PC-9 (cell line): ENCODE measurements at regions of chr1 and their contacts with region 1.

Region 1: GRCh38 chr1:172745014-172745413 is 86.1 kb downstream of the FASLG start:
- DNase-seq: peak; percentile 38 to 66
- H3K4me3 ChIP-seq: no peak overlapping the region
- H3K27ac ChIP-seq: no peak overlapping the region
- H3K4me1 ChIP-seq: peaks cover 22% of the 10 kb centered on the region
- H3K27me3 ChIP-seq: 0 out of 2 replicates have a peak, but pooled peaks cover 5% of the 10 kb centered on the region
- CTCF ChIP-seq: peak; percentile 86

Region 2: GRCh38 chr1:171636141-171636540 is 1108.9 kb before region 1 on chr1:
- CTCF ChIA-PET with region 1: no interaction called
- POLR2A ChIA-PET with region 1: no interaction called
- intact Hi-C with region 1: no loop called
- DNase-seq: no peak
- H3K4me3 ChIP-seq: no peak overlapping the region
- H3K27ac ChIP-seq: no peak overlapping the region
- H3K4me1 ChIP-seq: no peaks in the 10 kb centered on the region
- H3K27me3 ChIP-seq: peaks cover 24% of the 10 kb centered on the region
- CTCF ChIP-seq: no peak

Region 3: GRCh38 chr1:173043253-173043652 is 298.2 kb after region 1 on chr1:
- CTCF ChIA-PET with region 1: no interaction called
- POLR2A ChIA-PET with region 1: no interaction called
- intact Hi-C with region 1: loop called (anchors 2 kb)
- DNase-seq: peak in 1 of 2 experiments; percentile 79
- H3K4me3 ChIP-seq: peak overlapping the region; percentile 34; the same call in 1 of the 2 replicates
- H3K27ac ChIP-seq: peak overlapping the region; percentile 84
- H3K4me1 ChIP-seq: peaks cover 32% of the 10 kb centered on the region
- H3K27me3 ChIP-seq: no peaks in the 10 kb centered on the region
- CTCF ChIP-seq: no peak

Region 4: GRCh38 chr1:173202430-173203145 is 457.6 kb after region 1 on chr1:
- CTCF ChIA-PET with region 1: interaction called, 3 read pairs
- POLR2A ChIA-PET with region 1: interaction called, 6 read pairs
- intact Hi-C with region 1: loop called (anchors 1 kb)
- DNase-seq: peak in 1 of 2 experiments; percentile 33
- H3K4me3 ChIP-seq: no peak overlapping the region
- H3K27ac ChIP-seq: no peak overlapping the region
- H3K4me1 ChIP-seq: no peaks in the 10 kb centered on the region
- H3K27me3 ChIP-seq: no peaks in the 10 kb centered on the region
- CTCF ChIP-seq: peak; percentile 78

Region 5: DNA sequence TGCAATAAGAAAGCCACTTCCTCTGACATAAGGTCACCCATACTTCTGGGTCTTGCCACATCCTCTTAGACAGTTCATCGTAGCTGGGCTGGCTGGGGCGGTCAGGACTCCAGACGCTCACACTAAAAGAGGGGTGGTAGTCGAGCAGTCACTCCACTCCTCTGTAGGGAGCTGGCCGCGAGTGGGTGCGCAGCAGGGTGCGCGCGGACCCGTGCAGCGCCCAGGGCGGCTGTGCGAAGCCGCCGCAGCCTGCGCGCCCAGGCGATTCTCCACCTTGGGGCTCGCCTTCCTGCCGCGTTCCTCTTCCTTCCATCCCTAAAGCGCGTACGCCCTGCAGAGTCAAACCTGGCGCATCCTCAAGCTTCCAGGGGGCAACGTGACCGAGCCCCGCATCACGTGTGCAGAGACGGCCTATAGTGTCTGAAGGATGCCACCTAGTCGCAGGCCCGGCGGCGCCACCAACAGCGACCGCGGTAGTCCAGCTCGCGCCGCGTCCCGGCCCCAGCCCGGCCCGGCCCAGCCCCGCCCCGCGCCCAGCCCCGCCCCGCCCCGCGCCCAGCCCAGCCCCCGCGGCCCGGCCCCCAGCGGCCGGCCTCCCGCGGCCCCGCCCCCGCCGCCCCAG is 731.8 kb after region 1 on chr1:
- CTCF ChIA-PET with region 1: no interaction called
- POLR2A ChIA-PET with region 1: interaction called, 4 read pairs
- intact Hi-C with region 1: loop called (anchors 2 kb)
- DNase-seq: peak; percentile 87 to 90
- H3K4me3 ChIP-seq: peak overlapping the region; percentile 99
- H3K27ac ChIP-seq: peak overlapping the region; percentile 74
- H3K4me1 ChIP-seq: peaks cover 50% of the 10 kb centered on the region
- H3K27me3 ChIP-seq: no peaks in the 10 kb centered on the region
- CTCF ChIP-seq: 0 out of 2 replicates have a peak, but pooled peaks have one; percentile 21

Region 6: DNA sequence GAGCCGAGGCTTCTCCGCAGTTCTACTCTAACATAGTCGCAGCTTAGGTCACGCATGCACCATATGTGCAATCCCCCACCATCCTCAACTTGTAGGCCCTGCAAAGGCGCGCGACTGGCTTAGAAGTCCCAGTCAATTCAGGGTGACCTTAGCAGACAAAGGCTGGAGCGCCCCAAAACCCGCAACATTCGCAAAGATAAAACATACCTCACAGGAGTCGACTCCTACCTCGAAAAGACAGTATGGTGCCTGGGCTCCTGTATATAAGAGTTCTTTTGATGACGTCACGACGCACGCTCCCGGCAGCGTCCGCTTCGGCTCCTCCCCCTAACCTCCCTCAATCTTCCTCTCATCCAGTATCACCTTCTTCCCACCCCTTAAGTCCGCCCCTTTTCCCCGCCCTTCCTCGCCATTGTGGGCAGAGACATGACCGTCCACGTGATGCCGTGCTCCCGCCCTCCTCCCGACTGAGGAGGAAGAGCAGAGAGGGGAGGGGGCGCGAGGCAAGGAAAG is 1122.8 kb after region 1 on chr1 and contains the start of gene GAS5:
- CTCF ChIA-PET with region 1: no interaction called
- POLR2A ChIA-PET with region 1: interaction called, 3 read pairs
- intact Hi-C with region 1: loop called (anchors 1 kb)
- DNase-seq: peak; percentile 97 to 99
- H3K4me3 ChIP-seq: peak within 1 kb of the TSS; percentile 95
- H3K27ac ChIP-seq: peak within 1 kb of the TSS; percentile 91
- H3K4me1 ChIP-seq: peaks cover 37% of the 10 kb centered on the region
- H3K27me3 ChIP-seq: no peaks in the 10 kb centered on the region
- CTCF ChIP-seq: no peak
- total RNA-seq, gene GAS5: 234 and 352 TPM in 2 replicates

Region 7: GRCh38 chr1:174008979-174009378 is 1264.0 kb after region 1 on chr1:
- CTCF ChIA-PET with region 1: no interaction called
- POLR2A ChIA-PET with region 1: no interaction called
- intact Hi-C with region 1: no loop called
- DNase-seq: no peak
- H3K4me3 ChIP-seq: no peak overlapping the region
- H3K27ac ChIP-seq: no peak overlapping the region
- H3K4me1 ChIP-seq: no peaks in the 10 kb centered on the region
- H3K27me3 ChIP-seq: no peaks in the 10 kb centered on the region
- CTCF ChIP-seq: no peak

Region 8: DNA sequence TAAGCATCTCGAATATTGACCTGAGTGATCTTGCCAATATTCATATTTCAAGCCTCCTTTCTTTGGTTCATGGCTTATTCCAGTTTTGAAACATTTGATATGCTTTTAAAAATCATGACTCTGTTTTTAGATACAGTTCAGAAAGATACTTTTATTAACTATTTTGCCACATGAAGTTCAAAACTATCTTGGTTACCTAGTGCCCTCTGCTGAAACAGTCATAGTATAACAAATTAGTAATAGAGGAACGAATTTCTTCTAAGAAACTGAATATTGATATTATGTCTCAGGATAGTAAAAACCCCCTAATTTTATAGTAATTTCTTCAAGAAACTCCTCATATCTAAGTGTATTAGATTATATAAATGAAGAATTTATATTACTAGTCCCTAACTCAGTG is 1329.7 kb after region 1 on chr1:
- CTCF ChIA-PET with region 1: no interaction called
- POLR2A ChIA-PET with region 1: no interaction called
- intact Hi-C with region 1: loop called (anchors 10 kb)
- DNase-seq: peak in 1 of 2 experiments; percentile 38
- H3K4me3 ChIP-seq: no peak overlapping the region
- H3K27ac ChIP-seq: no peak overlapping the region
- H3K4me1 ChIP-seq: no peaks in the 10 kb centered on the region
- H3K27me3 ChIP-seq: no peaks in the 10 kb centered on the region
- CTCF ChIP-seq: peak; percentile 73

Region 9: DNA sequence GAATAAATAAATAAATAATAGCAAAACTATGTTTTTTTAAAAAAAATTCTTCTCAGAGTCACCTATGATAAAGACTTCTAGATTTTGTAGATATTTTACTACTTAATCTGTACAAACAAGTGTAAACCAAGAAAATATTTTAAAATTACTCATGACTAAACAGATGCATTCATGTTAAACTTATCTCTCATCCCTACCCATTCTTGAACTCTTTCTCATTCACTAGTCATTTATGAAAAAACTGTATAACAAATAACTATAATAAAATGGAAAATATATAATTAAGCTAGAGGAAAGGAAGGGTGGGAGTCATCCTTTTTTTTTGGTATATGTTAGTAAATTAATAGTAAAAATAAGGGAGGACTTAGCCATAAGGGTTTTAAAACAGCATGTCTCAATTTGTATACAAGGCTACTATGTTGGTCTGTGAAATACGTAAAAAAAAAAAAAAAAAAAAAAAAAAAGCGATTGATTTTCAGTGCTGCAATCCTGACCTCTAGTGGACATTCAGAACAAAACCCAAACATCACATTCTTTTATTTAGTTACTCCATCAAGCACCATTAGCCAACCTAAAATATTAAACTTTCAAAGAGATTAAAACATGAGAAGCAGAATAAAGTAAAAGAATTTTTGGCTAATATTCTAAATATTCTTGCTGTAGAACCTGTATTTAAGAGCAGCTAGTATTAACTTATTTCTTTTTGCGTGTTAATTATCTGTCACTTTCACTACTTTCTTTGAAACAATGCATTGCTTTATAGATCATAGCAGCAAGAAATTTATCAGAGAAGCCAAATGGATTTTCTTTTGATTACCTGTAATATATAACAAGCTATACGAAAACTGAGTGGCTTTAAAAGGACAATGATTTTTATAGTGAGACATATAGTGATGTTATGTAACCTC is 1998.9 kb after region 1 on chr1:
- CTCF ChIA-PET with region 1: no interaction called
- POLR2A ChIA-PET with region 1: no interaction called
- intact Hi-C with region 1: loop called (anchors 2 kb)
- DNase-seq: peak in 1 of 2 experiments; percentile 52
- H3K4me3 ChIP-seq: no peak overlapping the region
- H3K27ac ChIP-seq: no peak overlapping the region
- H3K4me1 ChIP-seq: peaks cover 21% of the 10 kb centered on the region
- H3K27me3 ChIP-seq: no peaks in the 10 kb centered on the region
- CTCF ChIP-seq: peak; percentile 75